ENCODE measurements at regions of chr4 and their contacts with region 1.

Region 1: GRCh38 chr4:25913851-25914669 is at the start of gene SMIM20:
- DNase-seq: peak; percentile 96
- H3K4me3 Mint-ChIP-seq: peak within 1 kb of the TSS; percentile 96
- H3K27ac Mint-ChIP-seq: peak within 1 kb of the TSS; percentile 99
- H3K4me1 Mint-ChIP-seq: peaks cover 17% of the 10 kb centered on the region
- H3K27me3 Mint-ChIP-seq: peaks cover 9% of the 10 kb centered on the region
- total RNA-seq, gene SMIM20: 17.0 and 18.9 TPM in 2 replicates

Region 2: GRCh38 chr4:25376754-25377571 is 537.1 kb before region 1 on chr4 and contains the start of gene ANAPC4:
- intact Hi-C with region 1: loop called (anchors 1 kb)
- DNase-seq: peak; percentile 99
- H3K4me3 Mint-ChIP-seq: no peak within 1 kb of the TSS
- H3K27ac Mint-ChIP-seq: peak within 1 kb of the TSS; percentile 87
- H3K4me1 Mint-ChIP-seq: peaks cover 8% of the 10 kb centered on the region
- H3K27me3 Mint-ChIP-seq: no peaks in the 10 kb centered on the region
- total RNA-seq, gene ANAPC4: 37.4 and 42.1 TPM in 2 replicates

Region 3: DNA sequence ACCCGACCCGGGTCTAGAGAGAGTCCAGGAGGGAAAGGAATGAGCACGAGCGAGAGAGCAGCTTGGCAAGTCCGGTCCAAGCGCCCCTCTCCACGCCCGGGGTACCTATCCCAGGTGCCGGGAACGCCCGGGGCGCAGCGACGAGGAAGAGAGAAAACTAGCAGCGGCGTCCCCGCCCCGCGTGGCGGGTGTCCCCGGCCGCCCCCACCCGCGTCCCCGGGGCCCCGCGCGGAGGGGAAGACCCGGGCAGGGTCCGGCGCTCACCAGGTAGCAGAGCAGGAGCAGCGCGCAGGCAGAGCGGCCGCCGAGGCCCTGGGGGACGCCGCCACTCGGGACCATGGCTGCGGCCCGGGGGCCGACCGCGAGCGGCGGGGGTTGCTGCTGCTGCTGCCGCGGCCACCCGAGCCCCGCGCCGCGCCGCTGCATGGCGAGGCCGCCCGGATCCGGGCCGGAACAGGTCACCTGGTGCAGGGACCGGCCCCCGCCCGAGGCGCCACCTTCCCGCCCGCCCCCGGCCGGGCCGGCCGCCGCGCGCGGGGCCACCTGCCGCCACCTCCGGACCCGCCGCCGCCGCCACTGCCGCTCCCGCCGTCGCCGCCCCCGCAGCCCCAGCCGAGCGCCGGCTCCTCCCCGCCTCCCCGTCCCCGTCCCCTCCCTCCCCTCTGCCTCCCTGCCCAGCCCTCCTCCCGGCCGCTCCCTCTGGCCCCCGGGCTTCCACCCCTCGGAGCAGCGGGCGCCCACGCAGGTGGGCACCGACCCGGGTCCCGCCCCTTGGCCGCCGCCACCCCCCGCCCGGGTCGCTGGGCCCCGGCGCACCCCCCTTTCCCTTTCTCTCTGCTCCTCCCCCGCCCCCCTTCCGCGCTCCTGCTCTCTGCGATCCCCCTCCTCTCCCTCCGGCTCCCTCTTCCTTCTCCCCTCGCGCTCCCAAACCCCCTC is 51.4 kb before region 1 on chr4 and contains the start of gene SEL1L3:
- intact Hi-C with region 1: loop called (anchors 1 kb)
- DNase-seq: peak; percentile 86
- H3K4me3 Mint-ChIP-seq: peak within 1 kb of the TSS; percentile 99
- H3K27ac Mint-ChIP-seq: peak within 1 kb of the TSS; percentile 100
- H3K4me1 Mint-ChIP-seq: peaks cover 30% of the 10 kb centered on the region
- H3K27me3 Mint-ChIP-seq: peaks cover 2% of the 10 kb centered on the region
- total RNA-seq, gene SEL1L3: 33.9 and 35.3 TPM in 2 replicates

Region 4: DNA sequence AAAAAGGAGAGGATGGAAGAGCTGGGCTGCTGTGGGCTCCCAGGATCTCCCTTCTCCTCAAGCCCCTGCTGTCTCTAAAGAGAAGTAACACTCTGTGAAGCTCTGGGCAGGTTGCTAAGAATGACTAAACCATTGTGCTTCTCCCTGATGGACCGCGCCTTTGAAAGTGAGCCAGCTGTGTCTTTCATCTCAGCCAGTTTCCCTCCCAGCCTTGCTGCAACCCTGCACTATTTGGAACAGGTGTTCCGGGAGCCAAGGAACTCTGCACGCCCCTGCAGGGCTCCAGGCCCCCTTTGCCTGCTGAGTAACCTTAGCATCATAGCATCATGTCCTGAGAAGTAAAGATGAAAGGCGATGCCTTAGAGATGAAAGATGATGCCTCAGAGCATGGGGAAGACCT is 39.7 kb after region 1 on chr4:
- intact Hi-C with region 1: loop called (anchors 5 kb)
- DNase-seq: no peak
- H3K4me3 Mint-ChIP-seq: no peak overlapping the region
- H3K27ac Mint-ChIP-seq: no peak overlapping the region
- H3K4me1 Mint-ChIP-seq: peaks cover 13% of the 10 kb centered on the region
- H3K27me3 Mint-ChIP-seq: peaks cover 21% of the 10 kb centered on the region

Region 5: DNA sequence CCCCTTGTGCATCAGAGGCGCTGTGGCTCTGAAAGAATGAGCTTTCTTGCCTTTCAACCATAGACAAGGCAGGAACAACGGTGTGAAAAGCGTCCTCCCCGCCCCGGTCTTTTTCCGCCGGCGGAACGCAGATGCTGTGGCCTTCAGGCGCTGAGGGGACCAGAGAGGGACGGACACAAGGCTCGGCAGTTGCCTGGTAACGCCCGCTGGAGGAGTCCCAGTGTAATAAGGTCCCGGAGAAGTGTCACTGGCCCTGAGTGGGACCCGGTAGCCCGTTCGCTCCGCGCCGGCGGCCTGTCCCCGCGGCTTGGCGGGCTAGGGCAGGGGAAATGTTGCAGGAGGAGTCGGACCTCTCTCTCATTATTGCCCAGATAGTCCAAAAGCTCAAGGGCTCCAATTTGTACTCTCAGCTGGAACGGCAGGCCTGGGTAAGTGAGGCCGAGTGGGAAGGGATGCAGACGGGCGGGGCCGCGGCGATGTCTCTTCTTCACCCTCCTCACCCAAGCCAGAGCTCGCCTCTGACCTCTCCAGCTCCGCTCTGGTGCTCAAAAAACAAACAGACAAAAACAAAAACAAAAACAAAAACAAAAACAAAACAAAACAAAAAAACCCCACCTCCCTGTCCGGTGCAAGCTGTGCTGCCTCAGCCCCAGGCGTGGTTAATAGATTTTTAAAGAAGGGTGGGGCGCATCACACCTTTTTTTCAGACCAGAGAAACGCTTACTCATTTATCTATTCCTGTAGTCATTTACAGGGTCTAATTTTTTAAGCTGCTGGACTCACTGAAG is 670.0 kb after region 1 on chr4 and contains the start of gene TBC1D19:
- intact Hi-C with region 1: loop called (anchors 1 kb)
- DNase-seq: peak; percentile 96
- H3K4me3 Mint-ChIP-seq: peak within 1 kb of the TSS; percentile 98
- H3K27ac Mint-ChIP-seq: peak within 1 kb of the TSS; percentile 95
- H3K4me1 Mint-ChIP-seq: peaks cover 27% of the 10 kb centered on the region
- H3K27me3 Mint-ChIP-seq: no peaks in the 10 kb centered on the region
- total RNA-seq, gene TBC1D19: 3.3 and 3.6 TPM in 2 replicates

Measured in activated CD4-positive, alpha-beta T cell treated with anti-CD3 and anti-CD28 coated beads, Interleukin-2, amount 10 ng/mL, durations not matched to agents 24 days and 14 days (primary cell).